ENCODE measurements at regions of chr3 and their contacts with region 1.

Region 1: GRCh38 chr3:73056014-73056844 is 5.2 kb upstream of the EBLN2 start:
- DNase-seq: no peak
- H3K4me3 ChIP-seq: no peak overlapping the region
- H3K27ac ChIP-seq: peak overlapping the region in 3 of 4 donors; percentile 18 to 52 (median 49)
- H3K4me1 ChIP-seq: peaks cover 8 to 25% (median 22%) of the 10 kb centered on the region in 4 donors
- H3K27me3 ChIP-seq: no peaks in the 10 kb centered on the region
- CTCF ChIP-seq: peak; percentile 47 to 66 (median 57)
- EP300 ChIP-seq: no peak
- POLR2A ChIP-seq: no peak

Region 2: GRCh38 chr3:72797773-72798543 is 258.3 kb before region 1 on chr3:
- in situ Hi-C with region 1: no loop called
- intact Hi-C with region 1: no loop called
- DNase-seq: peak; percentile 17
- H3K4me3 ChIP-seq: no peak overlapping the region
- H3K27ac ChIP-seq: no peak overlapping the region
- H3K4me1 ChIP-seq: peaks cover 0 to 6% (median 0%) of the 10 kb centered on the region in 4 donors
- H3K27me3 ChIP-seq: no peaks in the 10 kb centered on the region
- CTCF ChIP-seq: no peak
- EP300 ChIP-seq: no peak
- POLR2A ChIP-seq: no peak

Region 3: GRCh38 chr3:72938471-72939265 is 117.6 kb before region 1 on chr3:
- in situ Hi-C with region 1: loop called (anchors 5 to 25 kb)
- intact Hi-C with region 1: loop called (anchors 5 kb)
- DNase-seq: peak; percentile 28
- H3K4me3 ChIP-seq: no peak overlapping the region
- H3K27ac ChIP-seq: peak overlapping the region; percentile 29 to 62 (median 49)
- H3K4me1 ChIP-seq: peaks cover 0 to 32% (median 7%) of the 10 kb centered on the region in 4 donors
- H3K27me3 ChIP-seq: no peaks in the 10 kb centered on the region
- CTCF ChIP-seq: peak; percentile 49 to 96 (median 65)
- EP300 ChIP-seq: no peak
- POLR2A ChIP-seq: no peak

Region 4: DNA sequence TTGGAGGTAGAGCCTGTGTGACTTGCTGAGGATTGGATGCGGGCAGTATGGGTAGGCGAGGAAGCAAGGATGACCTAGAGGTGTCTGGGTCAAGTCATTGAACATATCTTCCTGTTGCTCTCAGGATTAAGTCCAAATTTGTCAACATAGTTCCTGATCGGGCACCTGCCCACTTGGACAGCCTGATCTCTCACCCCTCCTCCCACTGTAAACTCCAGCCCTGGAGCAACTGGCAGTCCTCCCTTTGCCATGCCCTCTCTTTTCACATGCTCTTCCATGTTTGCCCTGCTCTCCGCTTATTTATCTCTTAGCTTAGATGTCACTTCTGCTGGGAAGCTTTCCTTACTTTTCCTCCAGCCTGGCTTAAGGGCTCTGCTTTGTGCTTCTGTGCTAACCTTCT is 107.2 kb before region 1 on chr3:
- in situ Hi-C with region 1: loop called in 2 of 4 experiments (anchors 10 to 25 kb)
- intact Hi-C with region 1: no loop called
- DNase-seq: no peak
- H3K4me3 ChIP-seq: no peak overlapping the region
- H3K27ac ChIP-seq: peak overlapping the region in 1 of 4 donors; percentile 48
- H3K4me1 ChIP-seq: peaks cover 0 to 20% (median 2%) of the 10 kb centered on the region in 4 donors
- H3K27me3 ChIP-seq: no peaks in the 10 kb centered on the region
- CTCF ChIP-seq: no peak
- EP300 ChIP-seq: no peak
- POLR2A ChIP-seq: no peak

Region 5: GRCh38 chr3:73228437-73228836 is 172.2 kb after region 1 on chr3:
- in situ Hi-C with region 1: no loop called
- intact Hi-C with region 1: no loop called
- DNase-seq: no peak
- H3K4me3 ChIP-seq: no peak overlapping the region
- H3K27ac ChIP-seq: no peak overlapping the region
- H3K4me1 ChIP-seq: no peaks in the 10 kb centered on the region
- H3K27me3 ChIP-seq: no peaks in the 10 kb centered on the region
- CTCF ChIP-seq: no peak
- EP300 ChIP-seq: no peak
- POLR2A ChIP-seq: no peak

Region 6: DNA sequence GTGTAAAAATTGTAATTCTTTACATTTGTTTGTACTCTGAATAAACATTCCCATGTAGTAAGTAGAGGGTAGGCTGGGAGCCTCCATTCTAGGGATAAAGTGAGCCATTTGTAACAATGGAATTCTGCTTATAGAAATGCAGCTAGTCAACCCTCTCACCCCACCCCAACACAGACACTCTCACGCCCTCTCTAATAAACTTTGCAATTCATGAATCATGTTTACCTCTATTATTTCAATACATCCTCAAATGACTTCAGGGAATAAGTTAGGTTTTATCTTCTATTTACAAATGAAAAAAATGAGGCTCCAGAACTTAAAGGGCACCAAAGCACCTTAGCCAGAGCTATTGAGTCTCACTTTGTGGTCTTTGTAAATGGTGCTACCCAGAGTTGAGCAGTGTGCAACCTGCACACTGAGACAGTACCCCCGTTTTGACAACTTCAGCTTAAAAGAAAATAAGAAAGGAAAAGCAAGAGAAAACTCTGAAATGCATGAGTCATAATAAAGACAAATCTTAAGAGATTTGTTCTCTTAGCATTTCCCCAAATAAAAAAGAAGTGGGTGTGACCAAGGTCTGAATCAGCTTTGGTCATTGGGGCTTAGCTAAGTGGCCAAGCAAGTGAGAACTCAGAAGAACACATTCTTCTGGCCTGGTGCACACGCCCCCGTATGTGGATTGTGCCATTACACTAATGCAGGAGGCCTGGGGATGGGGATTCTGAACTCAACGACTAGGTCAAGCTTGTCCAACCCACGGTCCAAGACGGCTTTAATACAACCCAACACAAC is 625.2 kb after region 1 on chr3:
- in situ Hi-C with region 1: no loop called
- intact Hi-C with region 1: no loop called
- DNase-seq: no peak
- H3K4me3 ChIP-seq: no peak overlapping the region
- H3K27ac ChIP-seq: no peak overlapping the region
- H3K4me1 ChIP-seq: no peaks in the 10 kb centered on the region
- H3K27me3 ChIP-seq: no peaks in the 10 kb centered on the region
- CTCF ChIP-seq: no peak
- EP300 ChIP-seq: no peak
- POLR2A ChIP-seq: no peak